ENCODE measurements at regions of chr2 and their contacts with region 1.

Region 1: DNA sequence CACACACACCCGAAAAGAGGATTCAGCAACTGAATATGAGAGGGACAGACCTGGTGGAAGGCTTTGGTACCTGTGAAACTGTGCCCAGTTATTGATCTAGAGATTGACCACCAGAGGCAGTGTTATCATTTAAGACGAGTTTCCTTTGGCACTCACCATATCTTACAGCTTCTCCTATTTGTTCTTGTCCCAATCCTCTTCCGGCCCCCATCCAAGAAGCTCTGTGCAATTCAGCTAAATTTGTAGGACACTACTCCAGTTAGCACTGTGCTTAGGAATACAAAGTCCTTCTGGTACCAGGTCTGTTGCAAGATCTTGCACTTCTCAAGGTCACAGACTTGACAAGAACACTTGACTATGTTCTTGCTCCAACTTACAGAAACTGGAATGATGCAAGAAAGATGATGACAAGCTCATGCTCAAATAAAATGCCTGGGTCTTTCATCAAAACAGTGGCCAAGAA is 177.7 kb downstream of the TMEM247 start:
- DNase-seq: no peak

Region 2: DNA sequence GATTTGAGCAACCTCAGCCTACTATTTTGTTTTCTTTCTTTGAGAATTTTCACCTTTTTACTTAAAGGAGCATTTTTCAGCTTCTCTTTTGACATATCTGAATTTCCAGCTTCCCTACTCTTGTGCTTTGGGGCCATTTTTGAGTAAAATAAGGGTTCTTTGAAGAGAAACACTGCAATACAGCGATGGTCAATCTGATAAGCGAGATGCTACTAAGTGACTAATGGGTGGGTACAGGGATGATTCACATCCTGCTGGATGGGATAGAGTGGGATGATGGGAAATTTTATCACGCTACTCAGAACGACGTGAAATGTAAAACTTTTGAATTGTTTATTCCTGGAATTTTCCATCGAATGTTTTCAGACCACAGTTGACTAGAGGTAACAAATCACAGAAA is 33.8 kb after region 1 on chr2:
- intact Hi-C with region 1: loop called in 1 of 2 experiments (anchors 2 kb)
- DNase-seq: no peak

Region 3: DNA sequence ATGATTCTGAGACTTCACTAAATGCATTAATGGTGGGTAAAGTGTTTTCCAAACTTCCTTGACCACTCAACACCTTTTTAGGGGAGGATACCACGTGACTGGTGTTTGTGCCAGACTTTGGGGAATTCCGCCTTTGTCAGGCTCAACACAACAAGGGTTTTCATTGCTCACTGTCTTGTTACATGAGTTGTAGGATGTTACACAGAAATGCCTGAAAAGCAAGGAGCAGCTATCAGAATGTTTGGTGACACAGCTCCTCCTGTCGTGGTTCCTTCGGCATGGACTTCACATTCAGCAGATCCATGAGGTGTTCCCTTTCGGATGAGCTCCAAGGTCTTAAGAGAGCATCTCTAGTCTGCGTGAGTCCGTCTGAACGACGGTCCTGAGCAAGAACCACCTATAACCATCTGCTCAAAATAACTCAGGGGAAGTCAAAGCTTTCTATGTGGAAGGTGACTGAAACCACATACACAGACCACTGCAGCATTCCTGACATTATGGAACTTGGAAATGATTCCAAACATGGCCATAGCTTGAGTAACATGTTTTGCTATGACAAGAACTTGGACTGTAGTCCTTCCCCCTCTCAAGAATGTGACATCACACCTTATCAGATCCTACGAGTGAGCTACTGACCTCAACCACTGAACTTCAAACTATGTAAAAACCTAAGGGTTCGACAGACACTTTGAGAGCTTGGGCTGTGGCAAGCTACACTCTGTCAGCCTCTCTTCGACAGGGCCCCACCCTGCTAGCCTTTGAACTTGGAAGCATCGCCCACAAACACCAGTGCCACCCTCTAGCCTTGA is 201.0 kb after region 1 on chr2:
- intact Hi-C with region 1: no loop called
- DNase-seq: peak; percentile 70